ENCODE measurements at regions of chr15 and their contacts with region 1.

Region 1: GRCh38 chr15:65298731-65299130 is 2.9 kb downstream of the RNU5A-1 start:
- DNase-seq: no peak
- H3K4me3 ChIP-seq: no peak overlapping the region
- H3K4me3 Mint-ChIP-seq: no peak overlapping the region
- H3K27ac ChIP-seq: no peak overlapping the region
- H3K27ac Mint-ChIP-seq: no peak overlapping the region
- H3K4me1 ChIP-seq: peaks cover 29 to 39% of the 10 kb centered on the region in 2 donors
- H3K4me1 Mint-ChIP-seq: peaks cover 25% of the 10 kb centered on the region
- H3K27me3 ChIP-seq: no peaks in the 10 kb centered on the region
- H3K27me3 Mint-ChIP-seq: peaks cover 0 to 10% (median 0%) of the 10 kb centered on the region in 3 donors
- CTCF ChIP-seq: no peak

Region 2: GRCh38 chr15:65184868-65185738 is 113.6 kb before region 1 on chr15 and contains the start of gene CLPX:
- intact Hi-C with region 1: loop called (anchors 2 to 5 kb)
- DNase-seq: peak; percentile 92 to 94 (median 93)
- H3K4me3 ChIP-seq: peak within 1 kb of the TSS; percentile 85 to 97 (median 92)
- H3K4me3 Mint-ChIP-seq: peak within 1 kb of the TSS; percentile 94 to 98
- H3K27ac ChIP-seq: peak within 1 kb of the TSS; percentile 82 to 96
- H3K27ac Mint-ChIP-seq: peak within 1 kb of the TSS; percentile 90 to 97 (median 95)
- H3K4me1 ChIP-seq: peaks cover 17 to 27% of the 10 kb centered on the region in 2 donors
- H3K4me1 Mint-ChIP-seq: peaks cover 28% of the 10 kb centered on the region
- H3K27me3 ChIP-seq: no peaks in the 10 kb centered on the region
- H3K27me3 Mint-ChIP-seq: no peaks in the 10 kb centered on the region
- CTCF ChIP-seq: no peak
- polyA plus RNA-seq, gene CLPX: 15.2 to 24.9 (median 20.0) TPM

Region 3: DNA sequence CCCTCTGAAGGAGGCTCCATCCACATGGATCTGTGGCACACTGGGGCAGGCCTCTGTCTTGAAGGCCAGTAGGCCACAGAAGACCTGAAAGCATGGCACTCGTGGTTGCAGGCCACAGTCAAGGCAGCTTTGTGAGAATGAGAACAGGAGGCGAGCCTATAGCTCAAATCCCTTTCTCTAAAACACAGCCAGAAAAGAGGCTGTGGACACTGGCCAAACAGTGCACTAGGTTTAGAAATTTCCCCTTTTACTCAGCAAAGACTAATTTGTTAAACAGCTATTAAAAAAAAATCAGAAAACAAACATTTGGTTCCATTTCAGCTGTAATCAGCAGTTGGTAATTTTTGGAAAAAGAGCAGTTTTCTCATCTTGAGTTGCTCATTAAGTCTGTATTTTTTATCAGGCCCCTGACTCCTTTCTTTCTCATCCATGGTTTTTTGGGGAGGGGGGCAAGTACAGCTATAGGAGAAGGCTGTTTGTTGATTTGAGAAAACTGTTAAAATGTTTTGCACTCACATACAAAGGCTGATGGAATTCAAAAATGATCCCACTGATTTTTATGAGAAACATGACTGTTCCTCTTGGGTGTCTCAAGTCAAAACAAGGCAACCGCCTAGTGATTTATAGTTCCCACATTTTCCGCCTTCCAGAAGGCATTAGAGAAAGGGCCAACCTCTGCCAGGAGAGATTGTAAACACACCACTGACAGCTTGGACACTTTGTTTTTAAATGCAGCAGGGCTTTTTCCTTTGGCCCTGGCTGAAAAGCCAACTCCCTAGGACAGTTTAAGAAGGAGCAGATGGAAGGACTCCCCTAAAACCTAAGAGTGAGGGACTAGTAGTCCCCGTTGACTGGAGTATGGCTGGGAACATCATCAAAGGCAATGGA is 40.1 kb before region 1 on chr15:
- intact Hi-C with region 1: no loop called
- DNase-seq: no peak
- H3K4me3 ChIP-seq: no peak overlapping the region
- H3K4me3 Mint-ChIP-seq: no peak overlapping the region
- H3K27ac ChIP-seq: no peak overlapping the region
- H3K27ac Mint-ChIP-seq: peak overlapping the region in 1 of 7 donors; percentile 43
- H3K4me1 ChIP-seq: peaks cover 0 to 7% of the 10 kb centered on the region in 2 donors
- H3K4me1 Mint-ChIP-seq: peaks cover 6% of the 10 kb centered on the region
- H3K27me3 ChIP-seq: no peaks in the 10 kb centered on the region
- H3K27me3 Mint-ChIP-seq: no peaks in the 10 kb centered on the region
- CTCF ChIP-seq: no peak

Region 4: DNA sequence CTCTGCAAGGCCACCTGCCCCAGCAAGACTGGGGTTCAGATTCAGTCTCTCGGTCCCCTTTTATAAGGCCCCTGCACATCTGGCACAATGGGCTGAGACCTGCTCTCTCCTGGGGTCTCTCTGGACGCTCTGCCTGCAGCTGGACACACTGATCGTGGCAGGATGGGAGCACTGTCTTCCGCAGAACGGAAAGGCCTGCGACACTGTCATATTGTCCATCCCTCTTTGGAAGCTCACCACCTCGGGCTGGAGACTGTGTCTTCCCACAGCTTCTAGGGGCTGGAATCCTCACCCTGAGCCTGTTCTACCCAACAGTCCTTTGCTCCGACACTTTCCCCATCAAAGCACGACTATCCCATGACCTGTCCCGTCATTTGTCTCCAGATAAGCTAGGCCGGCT is 135.5 kb after region 1 on chr15:
- intact Hi-C with region 1: no loop called
- DNase-seq: no peak
- H3K4me3 ChIP-seq: no peak overlapping the region
- H3K4me3 Mint-ChIP-seq: no peak overlapping the region
- H3K27ac ChIP-seq: no peak overlapping the region
- H3K27ac Mint-ChIP-seq: no peak overlapping the region
- H3K4me1 ChIP-seq: no peaks in the 10 kb centered on the region
- H3K4me1 Mint-ChIP-seq: no peaks in the 10 kb centered on the region
- H3K27me3 ChIP-seq: no peaks in the 10 kb centered on the region
- H3K27me3 Mint-ChIP-seq: peaks cover 3 to 6% (median 5%) of the 10 kb centered on the region in 3 donors
- CTCF ChIP-seq: no peak